Heart right ventricle (tissue), 16 donors: ENCODE measurements at regions of chr18 and their contacts with region 1.

Region 1: DNA sequence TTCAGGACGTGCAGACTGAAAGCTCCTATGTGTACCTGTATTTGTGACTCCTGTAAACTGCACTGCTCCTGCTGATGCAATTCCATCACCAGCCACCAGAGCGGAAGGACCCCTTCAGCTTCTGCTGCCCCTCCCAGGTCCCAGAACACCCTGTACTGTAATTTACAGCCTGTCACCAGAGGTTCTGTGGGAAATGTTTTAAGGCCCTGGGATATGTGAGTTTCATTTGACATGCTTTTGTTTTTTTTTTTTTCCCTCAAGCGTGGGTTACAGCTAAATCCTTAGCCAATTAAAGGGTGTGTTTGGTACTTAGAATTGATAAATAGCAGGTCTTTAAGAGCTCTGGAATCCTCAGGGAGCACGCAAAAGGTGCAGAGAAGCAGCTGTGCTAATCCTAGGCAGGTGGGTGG is 79.4 kb downstream of the KCTD1 start:
- DNase-seq: no peak
- ATAC-seq: no peak
- H3K4me3 ChIP-seq: no peak overlapping the region
- H3K27ac ChIP-seq: no peak overlapping the region
- H3K4me1 ChIP-seq: peaks cover 0 to 17% (median 3%) of the 10 kb centered on the region in 9 donors
- H3K27me3 ChIP-seq: no peaks in the 10 kb centered on the region
- CTCF ChIP-seq: peak in 7 of 9 donors; percentile 31 to 43 (median 39)

Region 2: GRCh38 chr18:26407706-26408601 is 61.0 kb before region 1 on chr18:
- intact Hi-C with region 1: no loop called
- DNase-seq: no peak
- ATAC-seq: no peak
- H3K4me3 ChIP-seq: no peak overlapping the region
- H3K27ac ChIP-seq: no peak overlapping the region
- H3K4me1 ChIP-seq: no peaks in the 10 kb centered on the region
- H3K27me3 ChIP-seq: no peaks in the 10 kb centered on the region
- CTCF ChIP-seq: no peak

Region 3: DNA sequence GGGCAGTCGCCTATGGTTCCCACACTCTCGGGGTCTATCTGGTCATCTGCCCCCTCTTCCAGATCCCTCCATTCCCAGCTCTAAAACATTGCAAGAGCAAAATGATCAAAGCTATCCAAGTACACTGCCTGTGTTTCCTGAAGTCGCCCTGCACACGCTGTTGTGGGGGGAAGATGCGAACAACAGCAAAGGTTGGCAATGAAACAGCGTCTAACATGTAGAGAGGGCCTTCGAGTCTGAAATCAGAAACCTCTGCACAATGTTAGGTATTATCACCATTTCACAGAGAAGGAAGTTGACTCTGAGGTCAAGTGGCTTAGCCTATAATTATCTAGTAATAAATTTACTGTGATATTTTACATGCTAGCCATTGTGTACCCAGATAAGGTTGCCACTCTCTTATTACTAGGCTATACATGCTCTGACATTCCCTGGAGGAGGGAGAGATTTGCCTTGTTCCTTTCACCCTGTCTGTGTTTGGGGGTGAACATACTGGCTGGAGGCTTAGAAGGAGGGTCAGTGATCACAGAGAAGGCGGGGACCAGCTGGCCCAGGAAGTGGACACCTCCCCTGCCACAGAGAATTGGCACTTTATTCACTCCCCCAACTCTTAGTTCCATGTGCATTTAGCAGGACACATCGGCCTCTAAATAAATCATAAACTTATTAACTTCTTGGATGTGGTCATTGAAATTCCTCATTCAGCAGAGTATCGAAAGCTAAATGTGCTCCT is 42.6 kb after region 1 on chr18:
- intact Hi-C with region 1: loop called in 1 of 10 experiments (anchors 10 kb)
- DNase-seq: no peak
- ATAC-seq: peak in 7 of 8 donors; percentile 31 to 66 (median 38)
- H3K4me3 ChIP-seq: peak overlapping the region in 1 of 10 donors; percentile 19
- H3K27ac ChIP-seq: peak overlapping the region in 6 of 10 donors; percentile 0 to 57 (median 47)
- H3K4me1 ChIP-seq: peaks cover 0 to 58% (median 28%) of the 10 kb centered on the region in 9 donors
- H3K27me3 ChIP-seq: no peaks in the 10 kb centered on the region
- CTCF ChIP-seq: no peak

Region 4: DNA sequence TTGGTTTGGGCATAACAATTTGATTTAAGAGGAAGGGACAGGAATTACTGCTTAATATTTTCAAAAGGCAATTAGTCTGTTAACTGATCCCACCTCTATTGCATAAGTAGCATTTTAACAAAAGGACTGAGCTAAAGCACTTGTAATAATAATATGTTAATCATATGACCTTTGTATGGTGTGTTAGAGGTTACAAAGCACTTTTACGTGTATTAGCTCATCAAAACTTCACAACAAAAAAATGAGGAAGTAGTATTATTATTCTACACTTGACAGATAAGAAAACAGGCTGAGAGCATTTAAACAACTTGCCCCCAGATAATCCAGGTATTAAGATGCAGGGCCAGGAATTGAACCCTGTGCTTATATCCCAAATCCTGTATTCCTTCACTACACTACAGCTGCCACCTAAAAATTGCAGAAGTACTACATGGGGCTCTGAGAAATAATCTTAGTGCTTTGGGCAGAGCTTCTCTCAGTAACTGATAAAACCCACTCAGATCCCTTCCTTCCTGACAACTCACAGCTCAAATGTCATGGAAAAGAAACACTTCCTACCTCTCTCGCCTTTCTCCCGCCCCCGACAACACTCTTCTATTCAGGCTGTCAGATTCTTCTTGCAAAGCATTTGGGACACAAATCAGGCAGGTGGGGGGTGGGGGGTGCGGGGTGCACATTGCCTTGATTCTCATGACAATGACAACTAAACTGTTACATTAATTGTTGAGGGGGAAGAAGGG is 100.2 kb after region 1 on chr18:
- intact Hi-C with region 1: loop called in 1 of 10 experiments (anchors 10 kb)
- DNase-seq: no peak
- ATAC-seq: no peak
- H3K4me3 ChIP-seq: no peak overlapping the region
- H3K27ac ChIP-seq: no peak overlapping the region
- H3K4me1 ChIP-seq: peaks cover 0 to 7% (median 0%) of the 10 kb centered on the region in 9 donors
- H3K27me3 ChIP-seq: peaks cover 0 to 5% (median 0%) of the 10 kb centered on the region in 7 donors
- CTCF ChIP-seq: no peak